Caco-2 (cell line): ENCODE measurements at regions of chrX and their contacts with region 1.

Region 1: GRCh38 chrX:76148753-76149152 is 24.1 kb upstream of the PBDC1 start:
- DNase-seq: no peak
- H3K4me3 ChIP-seq: peak overlapping the region; percentile 5
- H3K4me3 Mint-ChIP-seq: peak overlapping the region; percentile 66
- H3K27ac Mint-ChIP-seq: peak overlapping the region; percentile 76
- H3K4me1 ChIP-seq: peaks cover 12% of the 10 kb centered on the region; the same call in 1 of the 2 replicates
- H3K4me1 Mint-ChIP-seq: no peaks in the 10 kb centered on the region
- H3K27me3 ChIP-seq: no peaks in the 10 kb centered on the region
- H3K27me3 Mint-ChIP-seq: no peaks in the 10 kb centered on the region
- CTCF ChIP-seq: no peak

Region 2: DNA sequence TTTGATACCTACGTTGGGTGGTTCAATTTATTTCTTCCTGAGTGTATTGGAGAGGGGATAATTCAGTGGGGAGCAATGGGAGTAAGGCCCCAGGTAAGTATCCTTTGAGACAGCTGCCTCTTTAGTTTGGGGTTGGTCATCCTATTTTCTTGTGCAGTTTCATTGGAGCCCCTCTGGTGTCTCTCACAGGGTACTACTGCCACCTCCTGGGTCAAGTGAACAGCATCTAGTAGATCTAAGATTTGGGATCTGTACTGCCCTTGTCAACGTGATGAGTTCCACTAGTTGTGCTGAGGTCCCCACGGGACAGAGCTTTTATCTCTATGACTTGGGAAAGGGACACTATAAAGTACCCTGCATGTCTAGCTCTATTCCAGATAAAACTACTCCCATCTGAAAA is 104.7 kb after region 1 on chrX:
- CTCF ChIA-PET with region 1: no interaction called
- POLR2A ChIA-PET with region 1: no interaction called
- intact Hi-C with region 1: loop called (anchors 5 kb)
- DNase-seq: peak; percentile 48 to 56
- H3K4me3 ChIP-seq: no peak overlapping the region
- H3K4me3 Mint-ChIP-seq: no peak overlapping the region
- H3K27ac Mint-ChIP-seq: no peak overlapping the region
- H3K4me1 ChIP-seq: no peaks in the 10 kb centered on the region
- H3K4me1 Mint-ChIP-seq: no peaks in the 10 kb centered on the region
- H3K27me3 ChIP-seq: no peaks in the 10 kb centered on the region
- H3K27me3 Mint-ChIP-seq: peaks cover 4% of the 10 kb centered on the region
- CTCF ChIP-seq: peak; percentile 32 to 50